Left ventricle myocardium superior (tissue), 1 donor: ENCODE measurements at regions of chr10 and their contacts with region 1.

Region 1: DNA sequence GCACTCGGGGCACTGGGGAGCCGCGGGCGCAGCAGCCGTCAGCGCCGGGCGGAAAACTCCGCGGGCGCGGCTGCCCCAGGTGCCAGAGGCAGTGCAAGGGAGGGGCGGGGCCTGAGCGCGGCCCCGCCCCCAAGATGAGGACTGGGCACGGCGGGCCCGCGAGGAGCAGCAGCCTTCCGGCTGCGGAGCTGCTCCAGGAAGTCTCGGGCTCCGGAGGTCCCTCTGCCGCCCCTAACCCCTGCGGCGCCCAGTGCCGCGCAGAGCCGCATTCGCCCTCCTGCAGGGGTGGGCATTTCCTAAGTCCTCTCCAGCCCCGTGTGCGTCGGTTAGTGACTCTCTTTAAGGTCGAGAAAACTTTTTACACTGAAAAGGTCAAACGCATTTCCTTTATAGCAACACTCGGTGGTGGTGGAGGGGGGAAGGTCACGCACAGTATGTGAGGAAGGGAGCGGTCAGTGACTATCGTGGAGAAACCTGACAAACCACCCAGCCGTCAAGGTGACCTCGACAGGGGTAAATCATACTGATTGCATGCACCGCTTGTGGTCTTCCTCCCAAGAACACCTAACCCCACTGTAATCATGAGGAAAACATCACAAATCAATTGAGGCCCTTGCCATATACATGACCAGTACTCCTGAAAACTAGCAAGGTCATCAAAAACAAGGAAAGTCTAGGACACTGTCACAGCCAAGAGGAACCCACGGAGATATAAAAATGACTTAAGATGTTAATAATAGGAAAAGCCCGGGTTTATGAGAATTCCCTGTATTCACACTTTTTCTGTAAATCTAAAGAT is at the start of gene ANXA11:
- DNase-seq: peak; percentile 93
- ATAC-seq: peak; percentile 75
- total RNA-seq, gene ANXA11: 405 TPM

Region 2: DNA sequence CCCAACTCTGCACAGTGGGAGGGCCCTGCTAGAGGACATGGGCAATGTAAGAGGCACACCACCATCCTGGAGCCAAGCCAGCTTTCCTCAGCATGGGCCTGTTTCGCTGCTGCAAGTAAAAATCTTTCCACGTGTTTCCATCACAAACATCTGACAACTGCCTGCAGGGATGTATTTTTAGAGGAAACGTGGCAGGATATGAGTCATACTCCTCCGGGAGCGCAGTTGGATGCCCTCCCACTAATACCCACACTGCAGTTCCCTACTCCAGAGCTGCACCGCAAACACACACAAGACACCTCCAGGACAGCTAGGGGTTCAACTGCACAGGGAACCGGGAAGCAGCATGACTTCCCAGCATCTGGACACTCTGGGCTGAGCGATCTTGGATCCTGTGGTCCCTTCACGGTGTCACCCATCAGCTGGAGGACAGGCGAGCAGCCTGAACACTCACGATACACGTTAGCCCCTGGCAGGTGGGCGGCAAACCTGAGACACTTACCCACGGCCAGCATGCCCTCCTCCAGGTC is 47.0 kb before region 1 on chr10:
- intact Hi-C with region 1: loop called (anchors 5 kb)
- DNase-seq: peak; percentile 91
- ATAC-seq: peak; percentile 93